Dorsolateral prefrontal cortex (tissue), 120 donors: ENCODE measurements at regions of chr4 and their contacts with region 1.

Region 1: GRCh38 chr4:102344954-102345794 is at the start of gene SLC39A8:
- DNase-seq: peak; percentile 54 to 83 (median 72)
- H3K4me3 ChIP-seq: peak within 1 kb of the TSS; percentile 48 to 94 (median 73)
- H3K27ac ChIP-seq: peak within 1 kb of the TSS in 50 of 59 donors; percentile 8 to 84 (median 66)
- H3K27me3 ChIP-seq: no peaks in the 10 kb centered on the region
- CTCF ChIP-seq: peak in 55 of 56 donors; percentile 45 to 80 (median 65)
- total RNA-seq, gene SLC39A8: 5.8 to 22.6 (median 11.5) TPM

Region 2: DNA sequence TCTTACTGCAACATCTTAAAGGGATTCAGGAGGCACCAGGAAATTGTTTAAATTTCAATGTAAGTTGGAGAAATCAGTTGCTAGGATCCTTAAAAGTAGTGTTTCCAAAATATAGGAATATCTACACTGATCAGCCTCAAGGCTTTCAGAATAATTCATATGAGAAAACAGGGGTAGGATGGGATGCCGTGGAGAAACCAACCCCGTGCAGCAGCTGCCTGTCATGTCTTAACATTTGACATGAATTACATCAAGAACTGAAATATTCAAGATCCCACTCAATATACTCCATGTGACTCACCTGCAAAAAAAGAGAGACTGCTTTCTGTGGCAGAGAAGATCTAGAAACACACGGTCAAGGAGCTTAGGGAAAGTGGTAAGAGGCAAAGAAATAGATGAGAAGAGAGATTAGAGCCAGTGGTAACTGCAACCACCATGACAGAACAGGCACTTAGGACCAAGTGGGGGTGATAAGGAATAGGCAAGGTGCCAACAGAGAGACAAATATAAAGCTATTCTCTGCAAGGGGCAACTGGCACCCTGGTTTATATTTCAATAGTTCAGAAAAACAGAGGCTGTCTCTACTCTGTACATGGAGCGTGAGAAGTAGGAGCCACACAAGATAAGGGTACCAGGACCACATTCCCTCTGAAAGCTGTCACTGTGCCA is 63.9 kb before region 1 on chr4:
- intact Hi-C with region 1: no loop called
- DNase-seq: no peak
- H3K4me3 ChIP-seq: no peak overlapping the region
- H3K27ac ChIP-seq: no peak overlapping the region
- H3K27me3 ChIP-seq: no peaks in the 10 kb centered on the region
- CTCF ChIP-seq: no peak

Region 3: GRCh38 chr4:102420569-102421221 is 75.5 kb after region 1 on chr4:
- intact Hi-C with region 1: loop called (anchors 5 to 10 kb)
- DNase-seq: no peak
- H3K4me3 ChIP-seq: no peak overlapping the region
- H3K27ac ChIP-seq: no peak overlapping the region
- H3K27me3 ChIP-seq: no peaks in the 10 kb centered on the region
- CTCF ChIP-seq: peak in 1 of 56 donors; percentile 14

Region 4: GRCh38 chr4:102429553-102429952 is 84.4 kb after region 1 on chr4:
- intact Hi-C with region 1: loop called (anchors 5 to 10 kb)
- DNase-seq: no peak
- H3K4me3 ChIP-seq: no peak overlapping the region
- H3K27ac ChIP-seq: peak overlapping the region in 4 of 59 donors; percentile 24 to 90 (median 82)
- H3K27me3 ChIP-seq: no peaks in the 10 kb centered on the region
- CTCF ChIP-seq: no peak

Region 5: GRCh38 chr4:102483120-102483519 is 137.9 kb after region 1 on chr4:
- intact Hi-C with region 1: no loop called
- DNase-seq: no peak
- H3K4me3 ChIP-seq: no peak overlapping the region
- H3K27ac ChIP-seq: no peak overlapping the region
- H3K27me3 ChIP-seq: no peaks in the 10 kb centered on the region
- CTCF ChIP-seq: no peak